T-cell (primary cell): ENCODE measurements at regions of chr9 and their contacts with region 1.

Region 1: DNA sequence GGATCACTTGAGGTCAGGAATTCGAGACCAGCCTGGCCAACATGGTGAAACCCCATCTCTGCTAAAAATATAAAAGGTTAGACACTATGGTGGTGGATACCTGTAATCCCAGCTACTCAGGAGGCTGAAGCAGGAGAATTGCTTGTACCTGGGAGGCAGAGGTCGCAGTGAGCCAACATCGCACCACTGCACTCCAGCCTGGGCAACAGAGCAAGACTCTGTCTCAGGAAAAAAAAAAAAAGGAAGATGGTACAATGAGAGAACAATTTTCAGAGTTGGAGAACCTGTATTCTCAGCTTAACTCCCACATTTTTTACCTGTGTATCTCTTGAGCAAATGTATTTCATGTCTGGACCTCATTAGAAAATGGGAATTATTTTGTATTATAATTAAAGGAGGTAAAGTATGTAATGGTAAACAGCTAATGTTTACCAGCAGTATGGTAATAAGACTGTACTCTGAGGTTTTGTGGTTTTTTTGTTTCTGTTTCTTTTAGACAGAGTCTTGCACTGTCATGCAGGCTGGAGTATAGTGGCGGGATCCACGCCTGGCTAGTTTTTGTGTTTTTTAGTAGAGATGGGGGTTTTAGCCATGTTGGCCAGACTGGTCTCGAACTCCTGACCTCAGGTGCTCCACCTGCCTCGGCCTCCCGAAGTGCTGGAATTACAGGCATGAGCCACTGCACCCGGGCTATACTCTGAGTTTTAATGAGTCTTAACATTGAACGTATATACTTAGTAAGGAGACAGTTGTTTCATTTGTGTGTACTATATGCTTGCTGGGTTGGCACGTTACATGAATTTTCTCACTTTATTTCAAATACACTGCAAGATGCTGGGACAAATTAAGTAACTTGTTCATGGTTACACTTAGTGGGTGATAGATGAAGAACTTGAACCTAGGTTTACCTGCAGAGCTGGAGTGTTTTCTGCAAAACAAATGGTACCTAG is 16.2 kb downstream of the UHRF2 start:
- DNase-seq: peak in 2 of 35 experiments; percentile 20 to 45
- ATAC-seq: peak; percentile 73 to 83 (median 74)
- H3K4me3 ChIP-seq: no peak overlapping the region
- H3K4me3 Mint-ChIP-seq: peak overlapping the region; percentile 47 to 59 (median 58)
- H3K27ac ChIP-seq: peak overlapping the region; percentile 47
- H3K27ac Mint-ChIP-seq: peak overlapping the region; percentile 79 to 85
- H3K4me1 ChIP-seq: peaks cover 14 to 30% of the 10 kb centered on the region in 2 experiments
- H3K4me1 Mint-ChIP-seq: peaks cover 82 to 88% (median 85%) of the 10 kb centered on the region in 3 donors
- H3K27me3 ChIP-seq: no peaks in the 10 kb centered on the region
- H3K27me3 Mint-ChIP-seq: no peaks in the 10 kb centered on the region

Region 2: DNA sequence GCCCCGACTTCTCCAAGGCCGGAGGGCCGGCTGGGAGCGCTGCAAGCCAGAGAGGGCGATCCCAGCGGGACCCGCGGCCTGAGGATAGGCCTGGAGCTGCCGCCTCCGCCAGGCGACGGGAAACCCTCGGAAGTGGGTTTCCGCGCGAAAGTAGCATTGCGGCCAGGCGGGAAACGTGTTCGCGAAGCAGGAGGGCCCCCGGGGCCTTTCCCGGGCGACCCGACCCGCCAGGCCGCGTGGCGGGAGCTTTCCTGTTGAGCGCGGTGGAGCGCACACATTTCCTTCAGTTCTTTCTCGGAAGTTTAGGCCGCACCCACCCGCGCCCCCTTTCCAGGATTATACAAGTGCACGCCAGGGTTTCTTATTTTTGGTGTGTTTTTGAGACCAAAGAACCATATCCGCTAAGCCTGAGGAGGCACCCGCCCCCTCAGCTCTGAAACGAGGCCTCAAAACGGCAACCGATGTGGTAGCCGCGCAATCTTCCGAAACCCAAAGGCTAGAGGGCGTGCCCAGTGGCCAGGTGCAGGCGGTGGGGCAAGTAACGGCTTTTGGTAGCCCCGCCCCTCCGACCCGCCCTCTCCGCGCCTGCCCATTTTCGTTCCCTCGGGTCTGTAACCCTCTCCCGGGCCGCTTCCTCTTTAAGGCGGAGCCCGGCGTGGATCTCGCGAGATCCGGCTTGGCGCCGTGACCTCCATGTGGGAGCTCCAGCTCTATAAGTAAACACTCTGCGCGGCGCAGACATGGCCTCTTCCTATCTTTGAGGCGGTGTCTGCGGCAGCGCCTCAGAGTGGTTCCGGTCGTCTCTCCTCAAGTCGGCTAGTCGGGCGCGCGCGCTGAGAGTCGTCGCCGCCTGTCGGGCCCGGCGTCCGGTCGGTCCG is 16.5 kb before region 1 on chr9 and contains the start of gene UHRF2:
- CTCF ChIA-PET with region 1: interaction called, 4 to 5 read pairs
- POLR2A ChIA-PET with region 1: interaction called, 5 to 24 read pairs
- DNase-seq: peak; percentile 96 to 100 (median 99)
- ATAC-seq: peak; percentile 89 to 93 (median 92)
- H3K4me3 ChIP-seq: peak within 1 kb of the TSS; percentile 76 to 90
- H3K4me3 Mint-ChIP-seq: peak within 1 kb of the TSS; percentile 87 to 91 (median 90)
- H3K27ac ChIP-seq: peak within 1 kb of the TSS; percentile 80
- H3K27ac Mint-ChIP-seq: peak within 1 kb of the TSS; percentile 93 to 96
- H3K4me1 ChIP-seq: peaks cover 22 to 27% of the 10 kb centered on the region in 2 experiments
- H3K4me1 Mint-ChIP-seq: peaks cover 33 to 35% (median 34%) of the 10 kb centered on the region in 3 donors
- H3K27me3 ChIP-seq: no peaks in the 10 kb centered on the region
- H3K27me3 Mint-ChIP-seq: no peaks in the 10 kb centered on the region
- total RNA-seq, gene UHRF2: 92.7 to 125 (median 96.2) TPM